GM10248 (cell line): ENCODE measurements at regions of chr17 and their contacts with region 1.

Region 1: GRCh38 chr17:75131280-75132017 is at the start of gene NT5C:
- DNase-seq: peak; percentile 92
- CTCF ChIP-seq: peak; percentile 73

Region 2: GRCh38 chr17:75142239-75142971 is 11.0 kb after region 1 on chr17:
- CTCF ChIA-PET with region 1: interaction called, 18 read pairs
- POLR2A ChIA-PET with region 1: no interaction called
- DNase-seq: no peak
- CTCF ChIP-seq: no peak

Region 3: GRCh38 chr17:75147878-75148546 is 16.6 kb after region 1 on chr17:
- CTCF ChIA-PET with region 1: interaction called, 18 read pairs
- POLR2A ChIA-PET with region 1: no interaction called
- DNase-seq: no peak
- CTCF ChIP-seq: no peak